ENCODE measurements at regions of chr10 and their contacts with region 1.

Region 1: GRCh38 chr10:114876602-114877300 is 55.2 kb downstream of the FHIP2A start:
- DNase-seq: peak; percentile 37
- H3K4me3 Mint-ChIP-seq: no peak overlapping the region
- H3K27ac Mint-ChIP-seq: no peak overlapping the region
- H3K4me1 Mint-ChIP-seq: peaks cover 19% of the 10 kb centered on the region
- H3K27me3 Mint-ChIP-seq: peaks cover 20% of the 10 kb centered on the region

Region 2: DNA sequence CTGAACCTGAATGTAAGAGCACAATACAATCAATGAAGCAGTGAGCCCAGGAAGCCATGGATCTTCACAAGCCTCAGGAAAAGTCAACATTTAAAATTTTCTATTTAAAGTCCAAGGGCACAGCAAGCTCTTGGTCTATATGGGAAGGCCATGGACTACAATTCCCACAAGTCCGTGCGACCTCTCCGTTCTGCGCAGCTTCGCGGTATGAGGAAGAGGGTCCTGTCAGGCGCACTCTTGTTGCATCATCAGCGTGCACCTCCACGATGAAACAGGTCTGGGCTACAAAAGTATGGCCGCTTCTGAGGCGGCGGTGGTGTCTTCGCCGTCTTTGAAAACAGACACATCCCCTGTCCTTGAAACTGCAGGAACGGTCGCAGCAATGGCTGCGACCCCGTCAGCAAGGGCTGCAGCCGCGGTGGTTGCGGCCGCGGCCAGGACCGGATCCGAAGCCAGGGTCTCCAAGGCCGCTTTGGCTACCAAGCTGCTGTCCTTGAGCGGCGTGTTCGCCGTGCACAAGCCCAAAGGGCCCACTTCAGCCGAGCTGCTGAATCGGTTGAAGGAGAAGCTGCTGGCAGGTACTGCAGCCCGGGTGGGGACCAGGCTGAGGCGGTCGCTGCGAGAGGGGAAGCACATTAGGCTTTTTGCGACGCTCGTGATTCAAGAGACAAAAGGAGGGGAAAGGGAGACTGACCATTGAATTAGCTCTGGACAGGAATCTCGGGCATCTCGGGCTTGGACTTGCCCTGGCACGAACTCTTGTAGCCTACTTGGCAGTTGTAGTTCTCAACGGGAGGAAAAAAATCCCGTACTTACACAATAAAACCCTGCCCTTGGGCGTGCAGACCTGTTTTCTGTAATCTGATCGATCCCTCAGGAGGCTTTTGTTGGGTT is 61.5 kb after region 1 on chr10 and contains the start of gene TRUB1:
- intact Hi-C with region 1: loop called (anchors 5 kb)
- DNase-seq: peak; percentile 80
- H3K4me3 Mint-ChIP-seq: peak within 1 kb of the TSS; percentile 95
- H3K27ac Mint-ChIP-seq: peak within 1 kb of the TSS; percentile 93
- H3K4me1 Mint-ChIP-seq: peaks cover 28% of the 10 kb centered on the region
- H3K27me3 Mint-ChIP-seq: no peaks in the 10 kb centered on the region
- total RNA-seq, gene TRUB1: 20.3 and 21.4 TPM in 2 replicates

Region 3: GRCh38 chr10:115049957-115050356 is 173.2 kb after region 1 on chr10:
- intact Hi-C with region 1: loop called (anchors 5 kb)
- DNase-seq: no peak
- H3K4me3 Mint-ChIP-seq: no peak overlapping the region
- H3K27ac Mint-ChIP-seq: no peak overlapping the region
- H3K4me1 Mint-ChIP-seq: no peaks in the 10 kb centered on the region
- H3K27me3 Mint-ChIP-seq: peaks cover 9% of the 10 kb centered on the region

Region 4: DNA sequence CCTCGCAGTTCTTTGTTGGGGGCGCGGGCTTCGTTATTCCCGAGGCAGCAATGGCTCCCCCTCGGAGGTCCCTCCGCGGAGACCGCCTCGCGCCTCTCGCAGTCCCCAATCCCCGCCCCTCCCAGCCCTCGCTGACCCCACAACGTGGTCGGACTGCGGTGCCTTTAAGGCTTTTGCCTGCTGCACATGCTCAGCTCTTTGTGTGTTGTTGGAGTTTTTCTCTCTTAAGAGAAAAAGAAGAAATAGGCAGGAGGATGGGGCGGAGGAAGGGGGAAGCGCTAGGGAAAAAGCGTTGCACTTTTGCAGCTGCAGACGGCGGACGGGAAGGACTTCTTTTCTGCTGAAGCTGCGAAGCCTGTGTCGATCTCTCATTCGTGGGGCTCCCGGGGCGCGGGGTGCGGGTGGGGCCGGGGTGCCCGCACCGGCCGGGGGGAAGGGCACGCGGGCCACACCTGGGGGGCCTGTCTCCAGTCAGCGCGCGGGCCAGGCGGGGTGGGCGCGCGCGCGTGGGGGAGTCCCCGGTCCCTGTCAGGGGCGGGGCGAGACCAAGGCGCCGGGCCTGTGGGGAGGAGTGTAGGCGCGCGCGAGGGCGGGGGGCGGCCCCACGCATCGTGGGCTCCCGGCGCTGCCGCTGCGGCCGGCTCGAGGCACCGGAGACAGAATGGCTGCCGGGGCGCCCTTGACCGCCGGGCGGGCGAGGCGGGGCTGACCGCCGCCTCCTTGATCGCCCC is 216.0 kb after region 1 on chr10:
- intact Hi-C with region 1: loop called (anchors 1 kb)
- DNase-seq: peak; percentile 21
- H3K4me3 Mint-ChIP-seq: peak overlapping the region; percentile 74
- H3K27ac Mint-ChIP-seq: no peak overlapping the region
- H3K4me1 Mint-ChIP-seq: peaks cover 9% of the 10 kb centered on the region
- H3K27me3 Mint-ChIP-seq: peaks cover 53% of the 10 kb centered on the region

Region 5: DNA sequence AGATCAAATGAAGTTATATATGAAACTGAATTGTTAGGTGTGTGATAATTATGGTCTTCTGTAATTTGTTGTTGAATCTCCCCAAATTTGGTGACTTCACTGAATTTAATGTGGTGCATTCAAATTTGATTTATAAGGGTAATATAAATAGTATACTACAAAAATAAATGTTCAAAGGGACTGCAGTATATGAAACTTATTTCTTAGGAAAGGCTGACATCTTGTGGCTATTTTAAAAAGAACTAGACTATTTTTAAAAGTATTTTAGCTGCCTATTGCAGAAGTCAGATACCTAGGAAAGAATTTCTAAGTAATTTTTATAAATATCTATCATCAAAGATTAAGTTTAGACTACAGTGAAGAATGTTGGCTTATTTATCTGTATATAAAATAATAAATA is 253.0 kb after region 1 on chr10:
- intact Hi-C with region 1: loop called (anchors 1 kb)
- DNase-seq: no peak
- H3K4me3 Mint-ChIP-seq: no peak overlapping the region
- H3K27ac Mint-ChIP-seq: no peak overlapping the region
- H3K4me1 Mint-ChIP-seq: no peaks in the 10 kb centered on the region
- H3K27me3 Mint-ChIP-seq: no peaks in the 10 kb centered on the region